Adrenal gland (tissue), 19 donors: ENCODE measurements at regions of chr3 and their contacts with region 1.

Region 1: GRCh38 chr3:117144853-117145252 is 435.3 kb downstream of the TUSC7 start:
- DNase-seq: no peak
- H3K4me3 ChIP-seq: no peak overlapping the region
- H3K27ac ChIP-seq: no peak overlapping the region
- H3K4me1 ChIP-seq: no peaks in the 10 kb centered on the region
- H3K27me3 ChIP-seq: no peaks in the 10 kb centered on the region
- CTCF ChIP-seq: no peak
- POLR2A ChIP-seq: no peak

Region 2: DNA sequence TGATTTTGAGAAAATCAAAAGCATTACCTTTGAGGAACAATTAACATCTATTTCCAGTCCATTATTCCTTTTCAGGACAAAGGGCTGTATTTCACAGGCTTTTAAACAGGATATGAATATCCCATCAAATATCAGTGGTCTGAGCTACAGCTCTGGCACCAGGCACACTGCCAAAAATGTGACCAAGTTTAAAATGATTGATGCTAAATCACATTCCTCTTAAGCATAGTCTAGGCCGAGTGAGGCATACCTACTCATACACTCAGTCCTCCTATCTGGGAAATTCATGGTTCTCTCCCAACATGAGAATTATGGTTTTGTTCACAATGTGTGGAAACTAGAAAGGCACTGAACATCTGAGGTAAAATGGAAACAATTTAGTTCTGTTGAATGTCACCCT is 248.3 kb after region 1 on chr3:
- intact Hi-C with region 1: no loop called
- DNase-seq: no peak
- H3K4me3 ChIP-seq: no peak overlapping the region
- H3K27ac ChIP-seq: no peak overlapping the region
- H3K4me1 ChIP-seq: no peaks in the 10 kb centered on the region
- H3K27me3 ChIP-seq: no peaks in the 10 kb centered on the region
- CTCF ChIP-seq: no peak
- POLR2A ChIP-seq: no peak

Region 3: DNA sequence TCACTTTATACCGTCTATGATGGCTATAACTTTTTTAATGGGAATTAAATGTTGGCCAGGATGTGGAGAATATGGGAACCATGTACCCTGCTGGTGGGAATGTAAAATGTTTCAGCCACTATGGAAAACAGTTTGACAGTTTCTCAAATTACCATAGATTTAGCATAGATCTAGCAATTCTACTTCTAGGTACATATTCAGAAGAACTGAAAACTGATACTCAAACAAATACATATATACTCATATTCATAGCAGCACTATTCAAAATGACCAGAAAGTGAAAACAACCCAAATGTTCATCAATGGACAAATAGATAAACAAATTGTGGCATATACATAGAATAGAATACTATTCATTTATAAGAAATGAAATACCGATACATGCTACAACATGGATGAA is 1350.4 kb after region 1 on chr3:
- intact Hi-C with region 1: loop called in 1 of 2 experiments (anchors 10 kb)
- DNase-seq: no peak
- H3K4me3 ChIP-seq: no peak overlapping the region
- H3K27ac ChIP-seq: no peak overlapping the region
- H3K4me1 ChIP-seq: no peaks in the 10 kb centered on the region
- H3K27me3 ChIP-seq: no peaks in the 10 kb centered on the region
- CTCF ChIP-seq: no peak
- POLR2A ChIP-seq: no peak